Naive thymus-derived CD4-positive, alpha-beta T cell (primary cell): ENCODE measurements at regions of chr11 and their contacts with region 1.

Region 1: GRCh38 chr11:122853971-122854446 is 15.7 kb downstream of the CRTAM start:
- DNase-seq: peak in 8 of 9 donors; percentile 27 to 70 (median 63)
- ATAC-seq: no peak
- H3K4me3 ChIP-seq: no peak overlapping the region
- H3K4me3 Mint-ChIP-seq: peak overlapping the region in 3 of 10 donors; percentile 31 to 33 (median 32)
- H3K27ac ChIP-seq: no peak overlapping the region
- H3K27ac Mint-ChIP-seq: peak overlapping the region in 5 of 9 donors; percentile 28 to 67 (median 49)
- H3K4me1 ChIP-seq: peaks cover 21 to 42% of the 10 kb centered on the region in 2 donors
- H3K4me1 Mint-ChIP-seq: peaks cover 25 to 44% (median 32%) of the 10 kb centered on the region in 7 donors
- H3K27me3 ChIP-seq: no peaks in the 10 kb centered on the region
- H3K27me3 Mint-ChIP-seq: peaks cover 0 to 11% (median 0%) of the 10 kb centered on the region in 5 donors

Region 2: DNA sequence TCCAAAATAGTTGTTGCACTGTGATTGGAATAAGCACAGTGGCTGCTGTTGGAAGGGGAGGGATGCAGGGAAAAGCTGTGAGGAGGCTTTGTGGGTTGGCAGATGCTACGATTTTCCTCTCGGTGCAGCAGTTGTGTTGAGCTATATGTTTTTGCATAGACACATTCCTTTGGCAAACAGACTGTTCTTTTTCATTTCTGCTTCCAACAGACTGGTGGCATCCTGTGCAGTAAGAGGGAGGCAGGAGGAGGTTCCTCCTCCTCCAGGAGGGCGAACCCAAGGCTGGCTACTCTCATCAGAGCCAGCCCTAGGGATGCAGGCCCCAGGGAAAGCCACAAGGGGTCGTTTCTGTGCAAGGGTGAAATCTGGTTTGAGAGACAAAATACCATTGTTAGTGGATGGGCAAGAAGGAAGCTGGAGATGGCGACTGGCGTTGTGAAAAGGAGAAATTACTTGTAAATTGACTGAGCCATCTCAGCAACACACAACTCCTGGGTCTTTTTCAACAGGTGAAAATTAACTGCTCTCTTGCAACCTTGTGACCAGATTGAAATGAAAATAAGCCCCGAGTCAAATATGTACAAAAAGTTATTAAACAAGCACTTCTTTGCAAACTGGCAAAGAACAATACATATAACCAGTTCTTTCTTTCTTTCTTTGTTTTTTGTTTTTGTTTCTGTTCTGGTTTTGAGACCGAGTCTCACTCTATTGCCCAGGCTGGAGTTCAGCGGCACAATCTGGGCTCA is 225.0 kb before region 1 on chr11:
- CTCF ChIA-PET with region 1: interaction called, 8 read pairs
- POLR2A ChIA-PET with region 1: no interaction called
- intact Hi-C with region 1: loop called (anchors 1 kb)
- DNase-seq: peak; percentile 46 to 70 (median 62)
- ATAC-seq: peak; percentile 93
- H3K4me3 ChIP-seq: no peak overlapping the region
- H3K4me3 Mint-ChIP-seq: no peak overlapping the region
- H3K27ac ChIP-seq: no peak overlapping the region
- H3K27ac Mint-ChIP-seq: peak overlapping the region in 4 of 9 donors; percentile 18 to 49 (median 24)
- H3K4me1 ChIP-seq: no peaks in the 10 kb centered on the region
- H3K4me1 Mint-ChIP-seq: peaks cover 0 to 30% (median 16%) of the 10 kb centered on the region in 7 donors
- H3K27me3 ChIP-seq: no peaks in the 10 kb centered on the region
- H3K27me3 Mint-ChIP-seq: peaks cover 0 to 16% (median 0%) of the 10 kb centered on the region in 5 donors

Region 3: DNA sequence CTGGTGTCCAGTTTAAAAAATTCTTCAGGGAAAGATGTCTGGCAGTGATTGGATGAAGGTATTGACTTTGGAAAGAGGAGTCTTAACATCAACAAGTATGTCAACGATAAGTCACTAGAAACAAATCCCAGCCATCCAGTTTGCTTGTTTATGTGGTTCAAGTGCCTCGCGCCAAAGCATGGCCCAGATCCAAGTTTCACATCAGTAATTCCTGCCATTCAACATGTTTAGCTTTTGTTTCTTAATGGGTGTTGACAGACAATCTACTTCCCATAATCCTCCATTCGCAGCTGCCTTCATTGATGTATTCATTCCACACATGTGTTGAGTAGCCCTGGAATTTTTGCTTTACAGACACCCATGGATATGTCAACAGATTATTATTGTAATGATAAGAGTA is 120.7 kb before region 1 on chr11:
- CTCF ChIA-PET with region 1: no interaction called
- POLR2A ChIA-PET with region 1: no interaction called
- intact Hi-C with region 1: no loop called
- DNase-seq: no peak
- ATAC-seq: peak; percentile 36
- H3K4me3 ChIP-seq: no peak overlapping the region
- H3K4me3 Mint-ChIP-seq: peak overlapping the region in 2 of 10 donors; percentile 57 to 76
- H3K27ac ChIP-seq: no peak overlapping the region
- H3K27ac Mint-ChIP-seq: peak overlapping the region in 3 of 9 donors; percentile 6 to 23 (median 21)
- H3K4me1 ChIP-seq: peaks cover 16 to 55% of the 10 kb centered on the region in 2 donors
- H3K4me1 Mint-ChIP-seq: peaks cover 11 to 45% (median 26%) of the 10 kb centered on the region in 7 donors
- H3K27me3 ChIP-seq: no peaks in the 10 kb centered on the region
- H3K27me3 Mint-ChIP-seq: no peaks in the 10 kb centered on the region

Region 4: GRCh38 chr11:122796128-122796717 is 57.8 kb before region 1 on chr11:
- CTCF ChIA-PET with region 1: interaction called, 248 read pairs
- POLR2A ChIA-PET with region 1: interaction called, 36 read pairs
- intact Hi-C with region 1: loop called (anchors 1 kb)
- DNase-seq: peak; percentile 36 to 72 (median 64)
- ATAC-seq: peak; percentile 95
- H3K4me3 ChIP-seq: no peak overlapping the region
- H3K4me3 Mint-ChIP-seq: no peak overlapping the region
- H3K27ac ChIP-seq: no peak overlapping the region
- H3K27ac Mint-ChIP-seq: peak overlapping the region in 2 of 9 donors; percentile 41 to 42
- H3K4me1 ChIP-seq: no peaks in the 10 kb centered on the region
- H3K4me1 Mint-ChIP-seq: peaks cover 0 to 5% (median 0%) of the 10 kb centered on the region in 7 donors
- H3K27me3 ChIP-seq: no peaks in the 10 kb centered on the region
- H3K27me3 Mint-ChIP-seq: no peaks in the 10 kb centered on the region

Region 5: DNA sequence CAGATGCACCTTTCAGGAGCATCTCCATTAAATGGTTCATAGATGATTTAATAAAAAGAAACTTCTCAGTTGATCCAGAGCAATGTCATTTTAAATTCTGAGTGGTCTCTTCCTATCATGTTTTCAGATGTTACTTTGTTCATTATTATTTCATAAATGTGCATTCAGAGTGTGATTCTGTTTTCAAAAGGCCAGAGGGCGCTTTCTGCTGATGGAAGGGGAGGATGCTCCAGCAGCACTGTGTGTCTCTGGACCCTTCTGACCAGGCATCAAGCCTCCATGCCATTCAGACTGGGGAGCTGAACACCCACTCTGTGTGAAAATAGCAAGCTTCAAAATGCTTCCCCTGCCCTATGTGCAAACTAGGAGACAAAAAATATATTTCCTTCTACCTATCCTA is 39.6 kb before region 1 on chr11:
- CTCF ChIA-PET with region 1: interaction called, 65 read pairs
- POLR2A ChIA-PET with region 1: interaction called, 9 read pairs
- intact Hi-C with region 1: loop called (anchors 1 to 5 kb)
- DNase-seq: no peak
- ATAC-seq: peak; percentile 27
- H3K4me3 ChIP-seq: no peak overlapping the region
- H3K4me3 Mint-ChIP-seq: no peak overlapping the region
- H3K27ac ChIP-seq: no peak overlapping the region
- H3K27ac Mint-ChIP-seq: peak overlapping the region in 3 of 9 donors; percentile 42 to 76 (median 52)
- H3K4me1 ChIP-seq: peaks cover 0 to 9% of the 10 kb centered on the region in 2 donors
- H3K4me1 Mint-ChIP-seq: peaks cover 8 to 40% (median 33%) of the 10 kb centered on the region in 7 donors
- H3K27me3 ChIP-seq: no peaks in the 10 kb centered on the region
- H3K27me3 Mint-ChIP-seq: no peaks in the 10 kb centered on the region

Region 6: GRCh38 chr11:122843281-122844141 is 10.5 kb before region 1 on chr11:
- CTCF ChIA-PET with region 1: interaction called, 24 read pairs
- POLR2A ChIA-PET with region 1: interaction called, 77 read pairs
- intact Hi-C with region 1: loop called in 1 of 2 experiments (anchors 1 kb)
- DNase-seq: peak in 7 of 9 donors; percentile 48 to 69 (median 55)
- ATAC-seq: peak; percentile 92
- H3K4me3 ChIP-seq: peak overlapping the region; percentile 32
- H3K4me3 Mint-ChIP-seq: peak overlapping the region; percentile 38 to 82 (median 70)
- H3K27ac ChIP-seq: peak overlapping the region; percentile 59
- H3K27ac Mint-ChIP-seq: peak overlapping the region; percentile 84 to 97 (median 90)
- H3K4me1 ChIP-seq: peaks cover 30 to 73% of the 10 kb centered on the region in 2 donors
- H3K4me1 Mint-ChIP-seq: peaks cover 24 to 57% (median 48%) of the 10 kb centered on the region in 7 donors
- H3K27me3 ChIP-seq: no peaks in the 10 kb centered on the region
- H3K27me3 Mint-ChIP-seq: peaks cover 0 to 5% (median 0%) of the 10 kb centered on the region in 5 donors